ENCODE measurements at regions of chr10 and their contacts with region 1.

Region 1: DNA sequence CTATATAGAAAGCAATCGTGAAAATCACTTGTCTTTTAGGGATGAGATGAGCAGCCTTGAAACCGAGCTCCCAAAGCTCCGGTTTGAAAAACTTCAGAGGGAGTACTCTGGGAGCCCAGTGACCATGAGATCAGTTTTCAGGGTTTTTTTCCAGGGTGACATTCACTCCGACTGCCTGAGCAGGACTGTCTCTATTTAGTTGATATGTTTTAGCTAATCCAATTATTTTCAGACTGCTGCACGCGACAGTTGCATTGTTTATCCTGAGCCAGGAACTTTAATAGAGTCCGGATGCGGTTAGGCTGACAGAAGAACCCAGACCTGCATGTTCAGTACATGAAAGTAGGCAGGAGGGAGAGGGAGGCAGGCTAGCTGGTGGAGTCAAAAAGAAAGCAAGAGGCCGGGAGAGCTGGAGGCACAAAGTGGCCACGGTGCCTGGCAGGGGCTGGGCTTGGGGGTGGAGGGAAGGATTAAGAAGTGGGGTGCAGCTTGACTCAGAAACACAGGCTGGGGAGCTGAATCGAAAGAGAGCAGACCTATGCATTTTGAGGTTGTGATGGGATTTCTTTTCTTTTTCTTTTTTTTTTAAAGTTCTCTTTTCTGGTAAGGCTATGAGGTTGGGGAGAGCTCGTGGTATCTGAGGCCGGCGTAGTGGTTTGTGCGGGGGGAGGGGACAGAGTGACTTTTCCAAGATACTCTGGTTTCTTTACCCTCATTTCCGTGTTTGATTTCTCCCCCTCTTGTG is 5.6 kb downstream of the GATA3 start:
- DNase-seq: peak; percentile 83
- ATAC-seq: peak; percentile 55
- H3K4me3 Mint-ChIP-seq: peak overlapping the region; percentile 96
- H3K27ac Mint-ChIP-seq: peak overlapping the region; percentile 81
- H3K4me1 Mint-ChIP-seq: peaks cover 77% of the 10 kb centered on the region
- H3K27me3 Mint-ChIP-seq: no peaks in the 10 kb centered on the region

Region 2: GRCh38 chr10:8183241-8183704 is 123.1 kb after region 1 on chr10:
- CTCF ChIA-PET with region 1: no interaction called
- POLR2A ChIA-PET with region 1: interaction called, 5 read pairs
- intact Hi-C with region 1: loop called in 1 of 2 experiments (anchors 5 kb)
- DNase-seq: peak; percentile 23
- ATAC-seq: peak; percentile 88
- H3K4me3 Mint-ChIP-seq: no peak overlapping the region
- H3K27ac Mint-ChIP-seq: peak overlapping the region; percentile 1
- H3K4me1 Mint-ChIP-seq: peaks cover 28% of the 10 kb centered on the region
- H3K27me3 Mint-ChIP-seq: no peaks in the 10 kb centered on the region

Region 3: DNA sequence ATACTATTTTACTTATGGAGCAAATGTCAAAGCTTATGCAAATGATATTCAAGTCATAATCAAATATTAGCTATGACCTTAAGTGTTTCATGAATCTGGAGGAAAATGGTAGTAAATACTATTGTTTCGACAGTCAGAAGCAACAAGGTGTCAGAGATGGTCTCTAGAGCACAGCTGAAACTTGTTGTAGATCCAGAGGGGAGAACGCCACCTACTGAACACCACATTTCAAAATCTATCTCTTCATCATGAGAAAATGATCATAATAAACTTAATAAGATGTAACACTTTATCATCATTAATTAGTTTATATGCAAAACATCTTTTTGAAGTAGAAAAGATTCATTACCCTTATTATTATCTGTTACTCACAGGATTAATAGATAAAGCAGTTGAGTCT is 413.1 kb after region 1 on chr10:
- CTCF ChIA-PET with region 1: no interaction called
- POLR2A ChIA-PET with region 1: no interaction called
- intact Hi-C with region 1: loop called (anchors 2 kb)
- DNase-seq: peak; percentile 18
- ATAC-seq: peak; percentile 49
- H3K4me3 Mint-ChIP-seq: no peak overlapping the region
- H3K27ac Mint-ChIP-seq: no peak overlapping the region
- H3K4me1 Mint-ChIP-seq: peaks cover 5% of the 10 kb centered on the region
- H3K27me3 Mint-ChIP-seq: peaks cover 15% of the 10 kb centered on the region

Region 4: GRCh38 chr10:8577686-8578085 is 517.6 kb after region 1 on chr10:
- CTCF ChIA-PET with region 1: no interaction called
- POLR2A ChIA-PET with region 1: no interaction called
- intact Hi-C with region 1: loop called (anchors 5 kb)
- DNase-seq: peak; percentile 12
- ATAC-seq: peak; percentile 71
- H3K4me3 Mint-ChIP-seq: no peak overlapping the region
- H3K27ac Mint-ChIP-seq: peak overlapping the region; percentile 59
- H3K4me1 Mint-ChIP-seq: peaks cover 36% of the 10 kb centered on the region
- H3K27me3 Mint-ChIP-seq: peaks cover 31% of the 10 kb centered on the region

Measured in activated CD4-positive, alpha-beta T cell treated with anti-CD3 and anti-CD28 coated beads for 36 hours (primary cell).